Sciatic nerve (tissue), 2 donors: ENCODE measurements at regions of chr20 and their contacts with region 1.

Region 1: DNA sequence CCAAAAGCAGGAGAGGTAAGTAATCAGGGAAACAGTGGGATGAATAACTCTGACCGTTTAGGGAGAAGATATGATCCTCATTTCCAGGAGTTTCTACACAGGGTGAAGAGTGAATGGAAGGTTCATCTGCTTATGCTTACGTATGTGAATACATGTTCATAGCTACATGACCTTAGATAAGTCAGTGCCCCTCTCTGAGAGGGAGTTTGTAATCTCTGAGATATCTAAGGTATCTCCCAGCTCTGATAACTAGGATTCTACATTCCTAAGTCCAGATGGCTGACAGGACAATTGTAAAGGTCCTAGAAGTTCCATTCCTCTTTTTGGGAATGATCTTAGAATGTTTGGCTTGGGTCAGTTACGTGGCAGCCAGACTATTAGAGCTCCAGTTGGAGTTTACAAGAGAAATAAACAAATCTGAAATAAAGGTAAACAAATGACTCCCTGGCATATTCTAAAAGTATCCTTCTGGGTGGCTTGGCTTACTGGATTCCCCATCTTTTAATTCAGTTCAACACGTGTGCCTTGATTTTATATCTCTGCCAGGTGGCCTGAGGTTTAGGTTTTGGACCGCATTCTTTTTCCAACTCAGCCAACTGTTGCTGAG is 15.8 kb downstream of the PROCR start:
- DNase-seq: no peak
- ATAC-seq: no peak

Region 2: GRCh38 chr20:35092524-35093266 is 95.0 kb before region 1 on chr20 and contains the start of gene TRPC4AP:
- intact Hi-C with region 1: loop called (anchors 5 kb)
- DNase-seq: peak; percentile 93
- ATAC-seq: peak; percentile 95
- total RNA-seq, gene TRPC4AP: 50.4 TPM